SK-N-SH (cell line): ENCODE measurements at regions of chr15 and their contacts with region 1.

Region 1: DNA sequence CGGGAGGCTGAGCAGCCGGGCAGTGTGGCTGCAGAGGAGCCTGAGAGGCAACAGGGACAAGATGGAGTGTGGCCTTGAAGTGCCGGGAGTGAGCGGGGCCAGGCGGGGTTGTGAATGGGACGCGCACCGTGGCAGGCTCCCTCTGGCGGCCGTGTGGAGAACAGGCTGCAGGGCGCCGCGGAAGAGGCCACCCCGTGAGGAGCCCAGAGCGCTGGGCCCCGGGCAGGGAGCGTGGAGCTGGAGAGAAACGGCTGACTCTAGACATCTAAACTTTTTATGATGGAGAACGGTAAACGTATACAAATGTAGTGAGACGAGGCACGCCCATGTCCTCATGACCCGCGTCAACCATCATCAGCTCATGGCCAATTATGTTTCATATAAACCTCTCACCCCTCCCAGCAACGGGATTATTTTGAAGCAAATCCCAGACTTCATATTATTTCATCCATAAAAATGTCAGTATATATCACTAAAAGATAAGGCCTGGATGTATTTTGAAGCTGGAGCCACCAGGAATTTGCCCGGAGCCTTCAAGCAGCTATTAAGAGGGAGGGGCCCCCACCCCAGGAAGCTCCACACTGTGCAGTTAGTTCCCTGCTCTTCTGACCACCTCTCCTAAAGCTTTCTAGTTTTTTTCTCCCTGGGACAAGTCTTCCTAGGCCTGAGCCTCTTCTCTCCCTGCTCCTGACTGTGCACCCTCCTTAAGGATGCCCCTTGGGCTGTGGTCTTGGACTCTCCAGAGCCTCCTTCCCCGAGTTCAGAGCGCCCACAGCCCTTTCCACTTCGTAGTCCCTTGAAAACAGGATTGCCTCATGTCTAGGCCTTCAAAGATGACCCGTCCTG is 149.4 kb downstream of the SMAD6 start:
- DNase-seq: peak; percentile 89
- H3K4me3 ChIP-seq: peak overlapping the region in 1 of 2 experiments; percentile 44; a peak in 1 of 4 replicates
- H3K27ac ChIP-seq: peak overlapping the region; percentile 34 to 42; a peak in 3 of 4 replicates
- H3K4me1 ChIP-seq: peaks cover 6 to 15% of the 10 kb centered on the region in 2 experiments; a peak in 2 of 4 replicates
- H3K27me3 ChIP-seq: no peaks in the 10 kb centered on the region
- CTCF ChIP-seq: peak; percentile 71
- EP300 ChIP-seq: no peak
- RAD21 ChIP-seq: peak; percentile 61

Region 2: GRCh38 chr15:66515901-66516322 is 335.5 kb before region 1 on chr15:
- CTCF ChIA-PET with region 1: no interaction called
- POLR2A ChIA-PET with region 1: no interaction called
- DNase-seq: no peak
- H3K4me3 ChIP-seq: no peak overlapping the region
- H3K27ac ChIP-seq: no peak overlapping the region
- H3K4me1 ChIP-seq: peaks cover 0 to 6% of the 10 kb centered on the region in 2 experiments; a peak in 1 of 4 replicates
- H3K27me3 ChIP-seq: no peaks in the 10 kb centered on the region
- CTCF ChIP-seq: no peak
- EP300 ChIP-seq: no peak
- RAD21 ChIP-seq: no peak

Region 3: GRCh38 chr15:66603301-66604179 is 247.9 kb before region 1 on chr15:
- CTCF ChIA-PET with region 1: interaction called, 84 read pairs
- POLR2A ChIA-PET with region 1: interaction called, 3 read pairs
- DNase-seq: peak; percentile 86
- H3K4me3 ChIP-seq: no peak overlapping the region
- H3K27ac ChIP-seq: no peak overlapping the region
- H3K4me1 ChIP-seq: no peaks in the 10 kb centered on the region; a peak in 1 of 4 replicates
- H3K27me3 ChIP-seq: no peaks in the 10 kb centered on the region
- CTCF ChIP-seq: peak; percentile 73
- EP300 ChIP-seq: no peak
- RAD21 ChIP-seq: peak; percentile 96

Region 4: DNA sequence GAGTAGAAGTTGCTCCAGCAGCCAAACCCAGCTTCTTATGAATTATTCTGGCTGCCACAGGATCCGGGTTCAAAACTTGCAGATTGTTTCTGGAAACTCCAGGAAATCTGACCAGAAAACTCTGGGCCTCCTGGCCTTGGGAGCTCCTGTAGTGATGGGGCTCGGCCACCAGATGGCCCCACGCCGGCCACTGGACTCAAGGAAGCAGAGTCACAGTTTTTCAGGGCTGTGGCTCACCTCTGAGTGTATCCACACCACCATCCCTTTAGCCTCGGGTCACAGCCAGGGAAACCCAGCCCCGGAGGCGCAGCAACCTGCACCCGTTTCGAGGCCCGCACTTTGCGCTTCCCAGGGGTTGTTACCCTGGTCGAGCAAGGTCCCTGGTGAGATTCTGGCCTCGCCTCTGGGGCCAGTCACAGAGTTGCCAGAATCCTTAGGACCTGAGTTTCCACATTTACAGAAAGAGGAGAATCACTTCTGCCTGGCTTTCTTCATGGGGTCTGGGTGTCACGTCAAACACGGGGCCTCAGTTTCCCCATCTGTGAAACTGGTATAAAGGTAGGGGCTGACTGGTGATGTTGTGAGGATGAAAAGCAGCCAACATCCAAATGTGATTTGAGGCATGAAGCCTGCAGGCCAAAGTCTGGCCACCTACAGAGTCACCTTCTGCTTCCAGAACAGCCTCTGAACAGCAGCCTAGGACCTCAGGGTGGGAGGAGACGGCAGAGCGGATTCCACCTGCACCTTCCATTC is 232.1 kb before region 1 on chr15:
- CTCF ChIA-PET with region 1: interaction called, 23 read pairs
- POLR2A ChIA-PET with region 1: no interaction called
- DNase-seq: peak; percentile 90
- H3K4me3 ChIP-seq: no peak overlapping the region; a peak in 1 of 4 replicates
- H3K27ac ChIP-seq: no peak overlapping the region
- H3K4me1 ChIP-seq: peaks cover 7 to 8% of the 10 kb centered on the region in 2 experiments; a peak in 2 of 4 replicates
- H3K27me3 ChIP-seq: no peaks in the 10 kb centered on the region
- CTCF ChIP-seq: peak; percentile 89
- EP300 ChIP-seq: no peak
- RAD21 ChIP-seq: peak; percentile 83

Region 5: DNA sequence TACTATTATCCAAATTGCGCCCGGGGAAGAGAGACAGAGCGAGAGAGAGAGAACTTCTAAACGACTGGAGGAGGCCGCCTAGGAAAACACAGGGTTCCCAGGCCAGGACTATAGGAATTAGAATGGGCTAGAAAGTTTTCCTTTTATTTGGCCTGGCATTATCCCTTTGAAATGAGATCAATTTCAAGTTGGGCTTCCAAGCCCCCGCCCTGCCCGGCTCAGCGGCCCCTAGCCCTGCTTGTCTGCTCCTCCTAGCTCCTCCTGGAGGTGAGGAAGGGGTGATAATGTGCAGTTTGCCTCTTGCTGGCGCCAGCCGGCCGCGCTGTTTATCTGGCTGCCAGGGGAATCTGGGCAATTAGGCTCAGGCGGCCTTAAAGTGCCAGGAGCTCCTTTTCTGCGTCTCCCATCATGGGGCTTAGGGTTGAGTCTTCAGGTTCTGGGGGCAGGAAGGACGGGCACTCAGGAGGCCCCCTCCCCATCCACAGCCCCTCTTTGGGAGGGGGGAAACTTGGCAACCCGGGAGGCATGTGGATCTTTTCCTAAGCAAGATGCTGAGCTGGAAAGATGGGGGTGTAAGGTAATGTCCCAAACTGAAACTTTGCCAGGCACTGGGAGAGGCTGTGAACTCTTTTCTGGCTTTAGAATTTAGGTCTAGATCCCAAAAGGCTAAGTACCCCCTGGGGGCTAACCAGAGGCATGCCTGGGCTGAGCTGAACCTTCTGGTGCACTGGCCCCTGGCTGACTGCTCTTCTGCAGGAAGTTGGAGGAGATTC is 144.0 kb before region 1 on chr15:
- CTCF ChIA-PET with region 1: interaction called, 25 read pairs
- POLR2A ChIA-PET with region 1: no interaction called
- DNase-seq: peak; percentile 90
- H3K4me3 ChIP-seq: peak overlapping the region; percentile 3 to 40; a peak in 2 of 4 replicates
- H3K27ac ChIP-seq: peak overlapping the region; percentile 62 to 74; a peak in 3 of 4 replicates
- H3K4me1 ChIP-seq: peaks cover 29 to 32% of the 10 kb centered on the region in 2 experiments; a peak in 3 of 4 replicates
- H3K27me3 ChIP-seq: no peaks in the 10 kb centered on the region
- CTCF ChIP-seq: peak; percentile 41; the same call in 1 of the 2 replicates
- EP300 ChIP-seq: peak; percentile 27 to 57; a peak in 2 of 4 replicates
- RAD21 ChIP-seq: peak; percentile 61

Region 6: GRCh38 chr15:66780172-66780972 is 71.1 kb before region 1 on chr15:
- CTCF ChIA-PET with region 1: interaction called, 45 read pairs
- POLR2A ChIA-PET with region 1: no interaction called
- DNase-seq: no peak
- H3K4me3 ChIP-seq: no peak overlapping the region
- H3K27ac ChIP-seq: peak overlapping the region in 1 of 2 experiments; percentile 62; a peak in 2 of 4 replicates
- H3K4me1 ChIP-seq: peaks cover 4 to 38% of the 10 kb centered on the region in 2 experiments; a peak in 3 of 4 replicates
- H3K27me3 ChIP-seq: no peaks in the 10 kb centered on the region
- CTCF ChIP-seq: no peak
- EP300 ChIP-seq: no peak
- RAD21 ChIP-seq: no peak

Region 7: GRCh38 chr15:66862878-66863335 is 11.5 kb after region 1 on chr15:
- CTCF ChIA-PET with region 1: interaction called, 28 read pairs
- POLR2A ChIA-PET with region 1: no interaction called
- DNase-seq: peak; percentile 78
- H3K4me3 ChIP-seq: no peak overlapping the region
- H3K27ac ChIP-seq: no peak overlapping the region
- H3K4me1 ChIP-seq: peaks cover 0 to 13% of the 10 kb centered on the region in 2 experiments; a peak in 3 of 4 replicates
- H3K27me3 ChIP-seq: no peaks in the 10 kb centered on the region
- CTCF ChIP-seq: peak; percentile 94
- EP300 ChIP-seq: no peak
- RAD21 ChIP-seq: peak; percentile 72